ENCODE measurements at regions of chr21 and their contacts with region 1.

Region 1: DNA sequence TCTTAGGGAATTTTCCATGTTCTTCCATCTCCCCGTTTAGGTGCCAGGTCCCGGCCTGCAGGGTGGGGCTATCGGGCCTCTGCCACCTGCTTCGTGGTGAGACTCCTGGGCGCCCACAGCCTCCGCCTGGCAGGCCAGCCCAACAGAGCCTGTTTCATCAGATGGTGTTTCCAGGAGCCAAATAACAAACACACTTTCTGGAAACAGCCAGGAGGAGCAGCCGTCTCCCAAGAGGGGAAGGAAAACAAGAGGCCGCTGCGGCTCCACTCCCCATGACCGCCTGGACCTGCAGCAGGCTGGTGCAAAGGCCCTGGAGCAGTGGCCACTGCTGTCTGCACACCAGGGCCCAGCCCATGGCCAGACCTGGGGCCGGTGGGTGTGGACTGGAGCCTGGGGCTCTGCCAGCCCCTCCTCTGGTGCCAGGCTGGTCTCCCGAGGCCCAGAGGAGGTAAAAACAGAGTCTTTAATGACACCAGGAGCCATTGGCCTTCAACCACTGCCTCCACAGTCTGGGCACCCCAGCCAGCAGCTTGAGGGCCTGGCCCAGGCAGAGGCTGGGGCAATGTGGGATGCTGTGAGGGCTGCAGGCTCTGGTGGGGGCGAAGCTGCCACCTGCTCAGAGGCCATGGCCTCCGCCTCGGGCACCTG is 55.0 kb downstream of the SLX9 start:
- DNase-seq: no peak
- H3K4me3 ChIP-seq: no peak overlapping the region
- H3K27ac ChIP-seq: no peak overlapping the region
- H3K4me1 ChIP-seq: no peaks in the 10 kb centered on the region
- H3K27me3 ChIP-seq: no peaks in the 10 kb centered on the region
- CTCF ChIP-seq: no peak
- POLR2A ChIP-seq: no peak

Region 2: GRCh38 chr21:45033791-45034555 is 39.2 kb after region 1 on chr21:
- intact Hi-C with region 1: loop called (anchors 5 kb)
- DNase-seq: no peak
- H3K4me3 ChIP-seq: no peak overlapping the region
- H3K27ac ChIP-seq: peak overlapping the region in 1 of 2 donors; percentile 63
- H3K4me1 ChIP-seq: no peaks in the 10 kb centered on the region
- H3K27me3 ChIP-seq: no peaks in the 10 kb centered on the region
- CTCF ChIP-seq: no peak
- POLR2A ChIP-seq: no peak

Region 3: GRCh38 chr21:45130324-45130774 is 135.5 kb after region 1 on chr21:
- intact Hi-C with region 1: loop called (anchors 5 kb)
- DNase-seq: no peak
- H3K4me3 ChIP-seq: no peak overlapping the region
- H3K27ac ChIP-seq: peak overlapping the region; percentile 41 to 58
- H3K4me1 ChIP-seq: peaks cover 4% of the 10 kb centered on the region
- H3K27me3 ChIP-seq: no peaks in the 10 kb centered on the region
- CTCF ChIP-seq: no peak
- POLR2A ChIP-seq: no peak

Region 4: GRCh38 chr21:45154511-45155508 is 160.0 kb after region 1 on chr21:
- intact Hi-C with region 1: no loop called
- DNase-seq: no peak
- H3K4me3 ChIP-seq: no peak overlapping the region
- H3K27ac ChIP-seq: no peak overlapping the region
- H3K4me1 ChIP-seq: no peaks in the 10 kb centered on the region
- H3K27me3 ChIP-seq: no peaks in the 10 kb centered on the region
- CTCF ChIP-seq: no peak
- POLR2A ChIP-seq: no peak

Measured in prostate gland (tissue), 2 donors.